ENCODE measurements at regions of chr12 and their contacts with region 1.

Region 1: DNA sequence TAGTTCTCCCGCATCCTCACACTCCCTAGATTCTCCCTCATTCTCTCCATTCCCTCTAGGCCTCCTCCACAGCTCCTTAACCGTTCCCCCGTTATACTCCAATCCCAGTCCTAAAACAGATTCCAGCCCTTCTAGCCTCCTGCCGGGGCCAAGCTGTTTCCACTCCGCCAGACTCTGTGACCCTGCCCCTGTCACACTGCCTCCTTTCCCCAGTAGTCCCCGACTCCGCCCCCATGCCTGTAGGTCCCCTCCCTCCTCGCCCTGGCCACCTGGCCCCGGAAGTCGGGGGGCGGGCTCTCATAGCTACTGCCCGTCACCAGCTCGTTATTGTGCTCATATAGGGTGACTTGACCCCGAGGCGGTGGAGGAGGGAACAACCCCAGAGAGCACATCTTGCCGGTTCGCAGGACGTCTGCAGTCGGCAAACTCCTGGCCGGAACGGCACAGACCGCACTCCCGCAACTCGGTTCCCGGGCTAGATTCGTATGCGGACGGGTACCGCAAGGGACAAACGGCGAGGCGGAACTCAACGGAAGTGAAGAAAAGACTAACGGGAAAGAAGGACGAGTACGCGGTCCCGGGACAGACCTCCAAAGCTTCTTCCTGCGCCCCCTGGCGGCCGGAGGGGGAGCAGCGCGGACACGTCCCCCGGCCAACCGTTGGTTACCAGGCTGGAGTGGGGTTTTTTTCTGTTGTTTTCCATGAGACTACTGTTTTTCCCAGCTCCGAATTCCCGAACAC is at the start of gene AAAS:
- DNase-seq: peak; percentile 93
- ATAC-seq: peak; percentile 84
- H3K4me3 Mint-ChIP-seq: peak within 1 kb of the TSS; percentile 95
- H3K27ac Mint-ChIP-seq: peak within 1 kb of the TSS; percentile 95
- H3K4me1 Mint-ChIP-seq: peaks cover 36% of the 10 kb centered on the region
- H3K27me3 Mint-ChIP-seq: no peaks in the 10 kb centered on the region
- CTCF ChIP-seq: peak; percentile 57
- total RNA-seq, gene AAAS: 57.3 and 72.1 TPM in 2 replicates

Region 2: DNA sequence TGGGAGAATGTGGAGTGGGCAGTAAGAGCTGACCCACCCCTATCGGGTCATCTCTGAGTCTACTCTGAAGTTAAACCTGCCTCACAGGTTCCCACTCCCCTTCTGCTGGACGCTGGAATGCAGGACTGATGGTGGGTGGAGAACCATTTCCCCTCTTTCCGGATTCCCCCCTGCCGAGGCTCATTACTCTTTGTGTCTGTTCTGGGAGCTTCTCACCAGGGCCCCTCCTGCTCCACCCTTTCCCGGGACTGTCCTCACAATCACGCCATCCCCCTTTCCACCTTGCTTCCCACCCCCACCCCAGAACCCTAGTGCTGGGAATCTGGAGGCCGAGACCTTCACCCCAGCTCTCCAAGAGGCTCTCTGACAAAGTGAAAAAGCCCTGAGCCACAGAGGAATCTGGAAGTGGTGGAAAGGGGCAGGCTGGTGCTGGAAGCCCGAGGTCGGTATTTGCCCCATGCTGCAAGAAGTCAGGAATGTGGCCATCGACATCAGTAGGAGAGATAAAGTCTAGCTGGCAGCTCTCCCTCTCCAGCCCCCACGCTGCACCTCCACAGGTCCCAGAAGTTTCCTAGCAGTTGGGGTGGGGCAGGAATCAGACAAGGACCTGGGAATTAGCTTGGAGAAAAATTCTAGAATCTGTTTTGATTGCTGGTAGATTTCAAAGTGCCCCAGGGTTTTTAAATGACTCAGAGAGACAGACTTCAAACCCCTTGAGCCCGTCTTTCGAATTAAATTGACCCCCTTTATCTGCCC is 375.5 kb before region 1 on chr12:
- CTCF ChIA-PET with region 1: no interaction called
- POLR2A ChIA-PET with region 1: no interaction called
- intact Hi-C with region 1: no loop called
- DNase-seq: no peak
- ATAC-seq: no peak
- H3K4me3 Mint-ChIP-seq: no peak overlapping the region
- H3K27ac Mint-ChIP-seq: no peak overlapping the region
- H3K4me1 Mint-ChIP-seq: peaks cover 7% of the 10 kb centered on the region
- H3K27me3 Mint-ChIP-seq: peaks cover 17% of the 10 kb centered on the region
- CTCF ChIP-seq: no peak

Region 3: DNA sequence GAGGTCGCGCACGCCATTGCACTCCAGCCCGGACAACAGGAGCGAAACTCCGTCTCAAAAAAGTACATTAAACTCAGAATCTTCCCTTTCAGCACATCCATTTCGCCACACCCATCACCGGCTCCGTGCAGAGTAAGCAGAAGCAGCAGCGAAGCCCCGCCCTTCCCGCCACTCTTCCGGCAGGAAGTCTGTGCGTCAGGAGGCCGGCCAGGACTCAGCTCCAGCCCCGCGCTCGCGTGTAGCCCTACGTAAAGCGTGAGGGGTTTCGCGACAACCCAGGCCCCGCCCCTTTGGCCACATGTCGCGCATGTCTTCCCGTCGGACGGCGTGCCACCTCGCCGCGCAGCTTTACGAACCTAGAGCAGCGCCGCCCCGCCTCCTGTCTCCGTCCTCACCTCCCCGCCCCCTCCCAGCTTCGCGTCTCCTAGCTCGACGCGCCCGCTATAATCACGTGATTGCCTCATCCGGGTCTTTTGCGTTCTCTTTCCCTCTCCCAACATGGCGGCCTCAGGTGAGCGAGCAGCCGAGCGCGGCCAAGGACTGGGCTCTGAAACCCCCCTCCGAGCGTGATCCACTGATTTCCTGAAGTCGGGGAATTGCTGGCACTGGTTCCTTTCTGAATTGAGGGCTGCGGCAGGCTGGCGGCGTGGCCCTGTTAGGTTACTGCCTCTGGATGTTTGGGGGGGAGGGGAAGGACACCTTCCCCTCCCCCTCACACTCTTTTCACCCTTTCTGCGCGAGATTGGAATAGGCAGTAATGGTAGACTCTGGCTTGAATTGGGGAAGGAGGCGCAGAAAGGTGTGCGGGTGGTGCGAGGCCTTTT is 315.0 kb before region 1 on chr12 and contains the start of gene EIF4B:
- CTCF ChIA-PET with region 1: no interaction called
- POLR2A ChIA-PET with region 1: no interaction called
- intact Hi-C with region 1: loop called (anchors 1 kb)
- DNase-seq: peak; percentile 97
- ATAC-seq: peak; percentile 90
- H3K4me3 Mint-ChIP-seq: peak within 1 kb of the TSS; percentile 98
- H3K27ac Mint-ChIP-seq: peak within 1 kb of the TSS; percentile 98
- H3K4me1 Mint-ChIP-seq: peaks cover 51% of the 10 kb centered on the region
- H3K27me3 Mint-ChIP-seq: peaks cover 1% of the 10 kb centered on the region
- CTCF ChIP-seq: no peak
- total RNA-seq, gene EIF4B: 726 and 733 TPM in 2 replicates

Region 4: DNA sequence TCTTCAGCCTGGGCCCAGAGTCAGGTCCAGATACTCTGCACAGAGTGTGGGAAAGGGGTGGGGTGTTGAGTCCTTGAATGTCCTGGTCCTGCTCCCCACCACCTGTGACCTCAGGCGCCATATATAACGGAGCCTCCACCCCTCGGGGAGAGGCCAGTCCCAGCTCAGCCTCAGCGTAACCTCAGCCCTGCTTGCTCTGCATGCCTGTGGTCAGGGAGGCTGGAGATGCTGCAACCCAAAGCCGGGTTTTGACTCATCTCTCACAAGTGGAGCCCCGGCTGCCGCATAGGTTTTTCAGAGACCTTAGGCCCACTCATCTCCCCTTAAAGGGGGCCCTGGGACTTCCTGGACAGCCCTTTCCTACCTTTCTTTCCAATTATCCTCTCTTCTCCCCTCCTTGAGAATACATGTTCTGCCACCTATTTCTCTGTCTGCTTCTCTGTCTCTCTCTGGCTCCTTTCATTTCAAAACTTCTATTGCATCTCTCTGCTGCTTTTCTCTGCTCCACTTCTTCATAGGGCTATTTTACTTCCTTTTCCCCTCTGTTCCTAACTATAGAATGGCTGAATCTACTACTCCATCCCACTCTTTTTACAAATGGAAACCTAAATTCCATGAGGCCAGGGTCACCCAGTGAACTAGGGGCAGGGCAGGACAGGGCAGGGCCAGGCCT is 115.4 kb before region 1 on chr12:
- CTCF ChIA-PET with region 1: interaction called, 10 read pairs
- POLR2A ChIA-PET with region 1: interaction called, 5 read pairs
- intact Hi-C with region 1: no loop called
- DNase-seq: peak; percentile 50
- ATAC-seq: peak; percentile 66
- H3K4me3 Mint-ChIP-seq: peak overlapping the region; percentile 89
- H3K27ac Mint-ChIP-seq: peak overlapping the region; percentile 83
- H3K4me1 Mint-ChIP-seq: peaks cover 93% of the 10 kb centered on the region
- H3K27me3 Mint-ChIP-seq: no peaks in the 10 kb centered on the region
- CTCF ChIP-seq: no peak

Region 5: DNA sequence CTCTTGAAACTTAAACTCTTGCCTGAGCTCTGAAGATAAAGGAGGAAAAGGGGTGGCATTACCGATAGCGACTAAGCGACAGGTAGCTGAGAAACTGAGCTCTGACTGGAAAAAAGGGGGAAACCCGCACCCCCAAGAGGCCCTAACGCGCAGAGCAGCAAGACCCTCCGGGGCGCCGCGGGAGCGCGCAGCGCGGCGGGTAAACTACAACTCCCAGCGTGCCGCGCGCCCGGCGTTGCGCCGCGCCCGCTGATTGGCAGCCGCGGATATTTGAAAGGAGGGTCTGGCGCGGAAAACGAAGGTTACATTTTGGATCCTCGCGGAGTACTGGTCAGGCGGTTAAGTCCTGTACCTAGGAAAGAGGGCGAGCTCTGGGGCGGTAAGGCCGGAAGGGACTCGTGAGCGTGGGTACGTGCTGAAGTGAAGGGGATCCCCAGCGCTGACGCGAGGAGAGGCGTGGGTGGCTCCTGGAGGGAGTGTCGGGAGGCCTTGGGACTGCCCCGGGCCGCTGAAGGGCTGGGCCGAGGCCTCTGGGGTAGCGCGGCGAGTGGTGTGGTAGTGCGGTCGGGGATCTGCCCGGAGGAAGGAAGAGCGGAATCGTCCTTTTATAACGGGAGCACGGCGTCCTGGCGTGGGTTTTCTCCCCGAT is 53.1 kb before region 1 on chr12 and contains the start of gene ESPL1:
- CTCF ChIA-PET with region 1: interaction called, 6 read pairs
- POLR2A ChIA-PET with region 1: interaction called, 9 read pairs
- intact Hi-C with region 1: loop called (anchors 2 kb)
- DNase-seq: peak; percentile 84
- ATAC-seq: peak; percentile 94
- H3K4me3 Mint-ChIP-seq: peak within 1 kb of the TSS; percentile 98
- H3K27ac Mint-ChIP-seq: peak within 1 kb of the TSS; percentile 91
- H3K4me1 Mint-ChIP-seq: peaks cover 21% of the 10 kb centered on the region
- H3K27me3 Mint-ChIP-seq: no peaks in the 10 kb centered on the region
- CTCF ChIP-seq: no peak
- total RNA-seq, gene ESPL1: 6.2 and 8.2 TPM in 2 replicates

Region 6: GRCh38 chr12:53344824-53345485 is 23.7 kb after region 1 on chr12:
- CTCF ChIA-PET with region 1: interaction called, 148 read pairs
- POLR2A ChIA-PET with region 1: interaction called, 24 read pairs
- intact Hi-C with region 1: loop called (anchors 1 kb)
- DNase-seq: peak; percentile 61
- ATAC-seq: peak; percentile 90
- H3K4me3 Mint-ChIP-seq: peak overlapping the region; percentile 93
- H3K27ac Mint-ChIP-seq: peak overlapping the region; percentile 67
- H3K4me1 Mint-ChIP-seq: peaks cover 15% of the 10 kb centered on the region
- H3K27me3 Mint-ChIP-seq: peaks cover 6% of the 10 kb centered on the region
- CTCF ChIP-seq: no peak

Region 7: GRCh38 chr12:53451661-53452158 is 130.5 kb after region 1 on chr12 and contains the start of gene PCBP2:
- CTCF ChIA-PET with region 1: no interaction called
- POLR2A ChIA-PET with region 1: interaction called, 4 read pairs
- intact Hi-C with region 1: loop called (anchors 1 kb)
- DNase-seq: peak; percentile 92
- ATAC-seq: peak; percentile 92
- H3K4me3 Mint-ChIP-seq: peak within 1 kb of the TSS; percentile 99
- H3K27ac Mint-ChIP-seq: peak within 1 kb of the TSS; percentile 99
- H3K4me1 Mint-ChIP-seq: peaks cover 30% of the 10 kb centered on the region
- H3K27me3 Mint-ChIP-seq: no peaks in the 10 kb centered on the region
- CTCF ChIP-seq: no peak
- total RNA-seq, gene PCBP2: 841 and 853 TPM in 2 replicates

Region 8: GRCh38 chr12:53675651-53676453 is 354.6 kb after region 1 on chr12 and contains the start of gene ATP5MC2:
- CTCF ChIA-PET with region 1: interaction called, 3 read pairs
- POLR2A ChIA-PET with region 1: interaction called, 4 read pairs
- intact Hi-C with region 1: loop called (anchors 1 kb)
- DNase-seq: peak; percentile 92
- ATAC-seq: peak; percentile 94
- H3K4me3 Mint-ChIP-seq: peak within 1 kb of the TSS; percentile 99
- H3K27ac Mint-ChIP-seq: peak within 1 kb of the TSS; percentile 97
- H3K4me1 Mint-ChIP-seq: peaks cover 30% of the 10 kb centered on the region
- H3K27me3 Mint-ChIP-seq: peaks cover 18% of the 10 kb centered on the region
- CTCF ChIP-seq: peak; percentile 85
- total RNA-seq, gene ATP5MC2: 330 and 354 TPM in 2 replicates